Activated naive CD4-positive, alpha-beta T cell treated with anti-CD3 and anti-CD28 coated beads for 36 hours (primary cell): ENCODE measurements at regions of chr12 and their contacts with region 1.

Region 1: DNA sequence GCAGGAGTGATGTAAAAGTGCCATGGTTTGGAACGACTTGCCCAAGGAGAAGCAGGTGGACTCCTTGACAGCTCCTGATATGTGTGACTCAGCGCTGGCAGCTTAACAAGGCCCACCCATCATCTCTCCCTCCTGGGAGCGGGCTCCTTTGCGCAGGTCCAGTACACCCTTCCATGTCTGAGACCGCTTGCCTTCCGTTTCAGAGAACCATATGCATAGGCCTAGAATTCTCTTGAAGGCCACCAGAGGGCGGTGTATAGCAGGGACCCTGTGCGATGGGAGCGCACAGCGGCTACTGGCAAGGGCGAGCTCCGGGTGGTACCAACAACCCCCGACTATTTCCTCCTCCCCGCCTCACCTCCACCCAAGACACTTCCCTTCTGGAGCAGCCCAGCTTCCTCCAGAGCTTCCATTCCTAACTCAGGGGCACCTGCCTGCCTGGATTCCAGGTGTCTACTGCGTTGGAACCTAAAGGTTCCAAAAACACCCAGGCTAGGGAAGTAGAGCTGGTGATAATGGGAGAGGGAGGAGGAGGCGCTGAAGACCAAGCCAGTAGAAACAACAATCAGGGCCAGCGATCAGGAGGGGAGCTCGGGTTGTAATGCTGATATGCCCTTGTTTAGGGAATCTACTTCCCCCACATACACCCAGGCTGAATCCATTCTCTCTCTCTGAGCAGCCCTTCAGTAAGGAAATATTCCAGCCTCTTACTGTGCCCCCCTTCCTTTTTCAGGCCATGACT is 6.2 kb downstream of the DHH start:
- DNase-seq: peak; percentile 80
- H3K4me3 Mint-ChIP-seq: no peak overlapping the region
- H3K27ac Mint-ChIP-seq: no peak overlapping the region
- H3K4me1 Mint-ChIP-seq: peaks cover 40% of the 10 kb centered on the region
- H3K27me3 Mint-ChIP-seq: peaks cover 51% of the 10 kb centered on the region

Region 2: DNA sequence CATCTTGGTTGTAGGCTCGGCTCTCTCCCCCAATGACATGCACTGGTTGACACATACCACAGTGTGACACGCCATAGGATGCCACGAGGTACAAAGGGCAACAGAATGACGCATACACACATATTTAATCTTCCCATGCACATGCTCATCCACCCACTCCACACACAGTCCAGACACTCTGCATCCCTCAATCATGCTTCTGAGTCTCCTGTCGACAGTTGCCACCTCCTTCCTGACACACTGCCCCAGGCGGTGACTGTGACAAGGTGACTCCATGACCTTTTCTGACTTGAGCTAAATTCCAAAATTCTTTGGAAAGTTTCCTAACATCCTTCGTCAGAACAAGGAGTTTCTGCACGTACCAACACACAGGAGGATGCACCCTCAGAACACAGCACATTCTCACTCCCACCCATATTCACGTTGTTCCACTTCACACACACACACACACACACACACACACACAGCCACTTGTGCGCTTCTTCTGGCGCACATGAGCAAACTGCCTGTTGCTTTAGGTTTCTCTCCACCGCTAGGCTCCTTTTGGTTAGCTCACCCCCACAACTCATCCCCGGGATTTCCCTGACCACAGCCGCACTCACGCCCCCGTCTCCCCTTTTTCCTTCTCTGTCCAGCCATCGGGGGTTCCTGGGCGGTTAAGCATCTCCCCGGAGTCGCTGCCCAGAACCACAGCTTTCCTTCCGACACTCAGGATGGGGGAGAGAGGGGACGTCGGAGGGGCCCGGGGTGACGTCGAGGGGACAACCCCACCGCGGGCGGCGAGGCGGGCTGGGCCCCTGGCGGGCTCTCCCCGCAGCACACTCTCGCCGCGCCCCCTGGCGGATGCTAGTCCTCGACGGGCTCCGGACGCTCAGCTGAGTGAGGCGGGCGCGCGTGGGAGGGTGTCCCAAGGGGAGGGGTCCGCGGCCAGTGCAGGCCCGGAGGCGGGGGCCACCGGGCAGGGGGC is 110.8 kb before region 1 on chr12:
- CTCF ChIA-PET with region 1: interaction called, 4 read pairs
- intact Hi-C with region 1: loop called (anchors 5 kb)
- DNase-seq: peak; percentile 83
- H3K4me3 Mint-ChIP-seq: peak overlapping the region; percentile 19
- H3K27ac Mint-ChIP-seq: no peak overlapping the region
- H3K4me1 Mint-ChIP-seq: peaks cover 44% of the 10 kb centered on the region
- H3K27me3 Mint-ChIP-seq: peaks cover 67% of the 10 kb centered on the region

Region 3: GRCh38 chr12:49043856-49044258 is 44.5 kb before region 1 on chr12:
- CTCF ChIA-PET with region 1: interaction called, 11 read pairs
- intact Hi-C with region 1: no loop called
- DNase-seq: peak; percentile 85
- H3K4me3 Mint-ChIP-seq: no peak overlapping the region
- H3K27ac Mint-ChIP-seq: no peak overlapping the region
- H3K4me1 Mint-ChIP-seq: peaks cover 2% of the 10 kb centered on the region
- H3K27me3 Mint-ChIP-seq: no peaks in the 10 kb centered on the region

Region 4: GRCh38 chr12:49069507-49070346 is 18.6 kb before region 1 on chr12 and contains the start of gene RHEBL1:
- CTCF ChIA-PET with region 1: interaction called, 128 read pairs
- intact Hi-C with region 1: loop called (anchors 1 kb)
- DNase-seq: peak; percentile 100
- H3K4me3 Mint-ChIP-seq: peak within 1 kb of the TSS; percentile 99
- H3K27ac Mint-ChIP-seq: peak within 1 kb of the TSS; percentile 76
- H3K4me1 Mint-ChIP-seq: peaks cover 12% of the 10 kb centered on the region
- H3K27me3 Mint-ChIP-seq: no peaks in the 10 kb centered on the region
- total RNA-seq, gene RHEBL1: 11.8 to 15.2 TPM

Region 5: GRCh38 chr12:49121047-49121696 is 32.8 kb after region 1 on chr12:
- CTCF ChIA-PET with region 1: interaction called, 8 read pairs
- intact Hi-C with region 1: loop called (anchors 1 kb)
- DNase-seq: peak; percentile 24
- H3K4me3 Mint-ChIP-seq: no peak overlapping the region
- H3K27ac Mint-ChIP-seq: no peak overlapping the region
- H3K4me1 Mint-ChIP-seq: no peaks in the 10 kb centered on the region
- H3K27me3 Mint-ChIP-seq: no peaks in the 10 kb centered on the region

Region 6: DNA sequence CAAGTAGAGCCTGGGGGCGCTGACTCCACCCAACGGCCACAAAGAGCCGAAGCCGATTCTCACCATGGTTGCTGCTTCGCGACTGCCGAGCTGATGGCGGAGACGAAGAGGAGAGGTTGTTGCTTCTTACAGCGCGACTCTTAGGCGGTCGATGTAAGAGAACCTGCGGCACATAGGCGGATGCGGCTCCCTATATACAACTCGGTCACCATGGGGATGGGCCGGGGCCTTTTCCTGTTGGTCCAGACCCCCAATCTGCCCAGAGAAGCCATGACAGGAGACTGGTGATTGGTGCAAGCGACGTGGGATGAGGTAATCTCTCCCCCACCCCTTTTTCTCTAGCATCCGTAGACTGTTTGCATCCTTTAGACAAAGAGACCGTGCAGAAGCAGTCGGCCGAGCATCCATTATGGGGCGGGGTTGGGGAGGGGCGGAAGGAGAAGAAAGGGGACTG is 100.6 kb after region 1 on chr12 and contains the start of gene TUBA1A:
- CTCF ChIA-PET with region 1: no interaction called
- intact Hi-C with region 1: no loop called
- DNase-seq: peak; percentile 97
- H3K4me3 Mint-ChIP-seq: peak within 1 kb of the TSS; percentile 84
- H3K27ac Mint-ChIP-seq: peak within 1 kb of the TSS; percentile 86
- H3K4me1 Mint-ChIP-seq: peaks cover 13% of the 10 kb centered on the region
- H3K27me3 Mint-ChIP-seq: no peaks in the 10 kb centered on the region
- total RNA-seq, gene TUBA1A: 47.4 to 49.1 TPM

Region 7: DNA sequence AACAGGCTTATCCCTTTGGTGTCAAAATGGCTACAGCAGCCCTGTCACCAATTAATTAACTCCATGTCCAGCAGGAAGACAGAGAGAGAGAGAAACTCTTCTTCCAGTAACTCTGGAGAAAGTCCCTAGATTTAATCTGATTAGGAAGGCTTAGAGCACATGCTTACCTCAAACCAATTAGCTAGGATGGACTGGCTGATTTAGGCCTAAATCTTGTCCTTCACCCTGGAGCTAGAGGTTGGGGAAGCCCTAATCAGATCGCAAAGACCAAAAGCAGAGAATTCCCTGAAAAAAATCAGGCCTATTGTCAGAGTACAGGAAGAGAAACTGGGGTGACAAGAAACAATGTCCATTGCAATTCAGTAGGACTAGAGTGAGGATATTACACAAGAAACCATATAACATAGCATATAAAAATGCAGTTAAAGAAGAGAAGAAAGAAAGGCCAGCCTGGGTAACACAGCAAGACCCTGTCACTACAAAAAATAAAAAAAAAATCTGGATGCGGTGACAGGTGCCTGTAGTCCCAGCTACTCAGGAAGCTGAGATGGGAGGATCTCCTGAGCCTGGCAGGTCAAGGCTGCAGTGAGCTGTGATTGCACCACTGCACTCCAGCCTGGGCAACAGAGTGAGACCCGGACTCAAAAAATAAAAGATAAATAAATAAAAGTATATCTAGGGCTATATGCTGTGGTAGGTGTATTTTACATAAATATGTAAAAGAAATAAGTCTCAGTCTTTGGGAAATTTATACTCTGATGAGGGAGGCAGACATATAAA is 135.4 kb after region 1 on chr12:
- CTCF ChIA-PET with region 1: interaction called, 12 read pairs
- intact Hi-C with region 1: no loop called
- DNase-seq: no peak
- H3K4me3 Mint-ChIP-seq: no peak overlapping the region
- H3K27ac Mint-ChIP-seq: no peak overlapping the region
- H3K4me1 Mint-ChIP-seq: no peaks in the 10 kb centered on the region
- H3K27me3 Mint-ChIP-seq: no peaks in the 10 kb centered on the region

Region 8: GRCh38 chr12:49342066-49342913 is 253.9 kb after region 1 on chr12:
- CTCF ChIA-PET with region 1: no interaction called
- intact Hi-C with region 1: loop called (anchors 5 kb)
- DNase-seq: peak; percentile 90
- H3K4me3 Mint-ChIP-seq: no peak overlapping the region
- H3K27ac Mint-ChIP-seq: no peak overlapping the region
- H3K4me1 Mint-ChIP-seq: peaks cover 48% of the 10 kb centered on the region
- H3K27me3 Mint-ChIP-seq: peaks cover 78% of the 10 kb centered on the region

Region 9: GRCh38 chr12:49451468-49452259 is 363.3 kb after region 1 on chr12:
- CTCF ChIA-PET with region 1: no interaction called
- intact Hi-C with region 1: no loop called
- DNase-seq: no peak
- H3K4me3 Mint-ChIP-seq: no peak overlapping the region
- H3K27ac Mint-ChIP-seq: peak overlapping the region; percentile 78
- H3K4me1 Mint-ChIP-seq: peaks cover 22% of the 10 kb centered on the region
- H3K27me3 Mint-ChIP-seq: no peaks in the 10 kb centered on the region

Region 10: GRCh38 chr12:50351120-50352043 is 1263.0 kb after region 1 on chr12:
- CTCF ChIA-PET with region 1: no interaction called
- intact Hi-C with region 1: no loop called
- DNase-seq: no peak
- H3K4me3 Mint-ChIP-seq: no peak overlapping the region
- H3K27ac Mint-ChIP-seq: no peak overlapping the region
- H3K4me1 Mint-ChIP-seq: no peaks in the 10 kb centered on the region
- H3K27me3 Mint-ChIP-seq: no peaks in the 10 kb centered on the region